Naive thymus-derived CD4-positive, alpha-beta T cell (primary cell): ENCODE measurements at regions of chr16 and their contacts with region 1.

Region 1: GRCh38 chr16:67480833-67481560 is at the start of gene ATP6V0D1:
- DNase-seq: peak; percentile 97 to 100 (median 99)
- ATAC-seq: peak; percentile 94
- H3K4me3 ChIP-seq: peak within 1 kb of the TSS; percentile 92
- H3K4me3 Mint-ChIP-seq: peak within 1 kb of the TSS; percentile 95 to 100 (median 99)
- H3K27ac ChIP-seq: peak within 1 kb of the TSS; percentile 99
- H3K27ac Mint-ChIP-seq: peak within 1 kb of the TSS; percentile 95 to 99 (median 98)
- H3K4me1 ChIP-seq: peaks cover 15 to 25% of the 10 kb centered on the region in 2 donors
- H3K4me1 Mint-ChIP-seq: peaks cover 20 to 60% (median 37%) of the 10 kb centered on the region in 7 donors
- H3K27me3 ChIP-seq: no peaks in the 10 kb centered on the region
- H3K27me3 Mint-ChIP-seq: no peaks in the 10 kb centered on the region
- total RNA-seq, gene ATP6V0D1: 35.8 to 104 (median 54.7) TPM

Region 2: DNA sequence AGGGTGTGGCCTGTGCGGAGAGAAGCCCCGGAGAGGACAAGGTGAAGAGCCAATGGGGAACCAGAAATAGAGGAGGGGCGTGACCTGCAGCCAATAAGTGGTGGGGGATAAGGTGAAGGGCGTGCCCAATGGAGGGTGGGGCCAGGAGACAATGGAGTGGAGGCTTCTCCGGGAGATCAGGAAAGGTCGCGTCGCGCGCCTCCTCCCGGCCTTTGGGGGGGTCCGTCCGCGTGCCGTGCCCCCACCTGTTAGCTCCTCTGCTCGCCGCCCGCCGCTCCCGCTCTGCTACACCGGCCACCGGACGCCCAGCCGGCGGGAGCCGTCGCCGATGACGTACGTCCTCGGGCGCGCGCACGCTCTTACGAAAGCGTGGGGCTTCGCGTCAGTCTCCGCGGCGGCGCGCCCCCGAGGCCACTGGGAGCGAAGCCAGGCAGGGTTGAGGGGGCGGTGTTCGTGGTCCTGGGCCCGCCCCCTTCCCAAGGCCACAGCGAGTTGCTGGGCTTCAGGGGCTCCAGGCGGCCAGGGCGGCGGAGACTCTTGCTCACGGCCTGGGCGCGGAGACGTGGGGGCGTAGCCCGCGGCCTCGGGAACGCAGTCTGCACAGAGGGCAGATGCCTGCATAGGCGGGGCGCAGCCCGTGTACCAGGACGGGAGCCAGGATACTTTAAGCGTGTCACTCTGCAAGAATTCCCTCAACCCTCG is 297.2 kb before region 1 on chr16 and contains the start of gene MATCAP1:
- CTCF ChIA-PET with region 1: no interaction called
- POLR2A ChIA-PET with region 1: no interaction called
- intact Hi-C with region 1: loop called (anchors 2 kb)
- DNase-seq: peak; percentile 90 to 98 (median 96)
- ATAC-seq: peak; percentile 97
- H3K4me3 ChIP-seq: peak within 1 kb of the TSS; percentile 79
- H3K4me3 Mint-ChIP-seq: peak within 1 kb of the TSS in 5 of 10 donors; percentile 48 to 91 (median 86)
- H3K27ac ChIP-seq: peak within 1 kb of the TSS; percentile 97
- H3K27ac Mint-ChIP-seq: peak within 1 kb of the TSS in 2 of 9 donors; percentile 58 to 67
- H3K4me1 ChIP-seq: peaks cover 12 to 15% of the 10 kb centered on the region in 2 donors
- H3K4me1 Mint-ChIP-seq: peaks cover 8 to 24% (median 13%) of the 10 kb centered on the region in 7 donors
- H3K27me3 ChIP-seq: no peaks in the 10 kb centered on the region
- H3K27me3 Mint-ChIP-seq: peaks cover 4 to 15% (median 4%) of the 10 kb centered on the region in 5 donors
- total RNA-seq, gene MATCAP1: 4.3 to 88.1 (median 11.0) TPM

Region 3: DNA sequence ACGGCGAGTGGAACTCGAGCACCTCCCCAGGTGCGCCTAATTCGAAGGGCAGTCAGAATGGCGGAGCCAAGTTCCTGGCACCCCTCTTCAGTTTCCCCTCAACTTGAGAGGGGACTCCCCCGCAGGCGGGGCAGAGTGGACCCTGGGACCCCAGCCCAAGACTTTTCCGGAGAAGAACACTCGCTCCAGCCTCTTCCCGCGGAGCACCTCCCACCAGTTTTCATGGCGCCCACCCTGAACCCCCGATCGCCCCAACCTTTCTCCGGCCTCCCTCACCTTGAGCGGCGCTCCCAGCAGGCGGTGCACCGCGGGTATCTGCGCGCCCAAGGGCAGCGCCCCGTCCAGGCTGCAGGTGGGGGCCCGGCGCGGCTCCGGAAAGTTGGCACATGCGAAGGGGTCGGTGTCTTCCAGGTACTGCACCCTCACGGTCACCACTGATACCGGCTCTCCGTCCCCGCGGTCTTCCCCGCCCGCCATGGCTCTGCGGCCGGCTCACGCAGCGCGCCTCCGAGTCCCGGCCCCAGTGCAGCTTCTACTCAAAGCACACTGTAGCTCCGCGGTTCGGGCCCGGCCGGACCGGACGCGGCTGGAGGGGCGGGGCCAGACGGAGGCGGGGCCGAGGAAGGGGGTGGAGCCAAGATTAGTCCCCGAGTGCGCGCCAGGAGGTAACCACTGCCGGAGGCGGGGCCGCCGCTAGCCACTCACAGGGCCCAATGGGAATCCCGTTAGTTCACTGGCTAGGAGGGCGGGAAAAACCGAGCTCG is 233.9 kb before region 1 on chr16 and contains the start of gene FHOD1:
- CTCF ChIA-PET with region 1: no interaction called
- POLR2A ChIA-PET with region 1: no interaction called
- intact Hi-C with region 1: loop called in 1 of 2 experiments (anchors 5 kb)
- DNase-seq: peak; percentile 88 to 100 (median 91)
- ATAC-seq: peak; percentile 85
- H3K4me3 ChIP-seq: peak within 1 kb of the TSS; percentile 68
- H3K4me3 Mint-ChIP-seq: peak within 1 kb of the TSS; percentile 83 to 96 (median 91)
- H3K27ac ChIP-seq: peak within 1 kb of the TSS; percentile 60
- H3K27ac Mint-ChIP-seq: peak within 1 kb of the TSS; percentile 70 to 92 (median 80)
- H3K4me1 ChIP-seq: peaks cover 31 to 39% of the 10 kb centered on the region in 2 donors
- H3K4me1 Mint-ChIP-seq: peaks cover 37 to 51% (median 45%) of the 10 kb centered on the region in 7 donors
- H3K27me3 ChIP-seq: no peaks in the 10 kb centered on the region
- H3K27me3 Mint-ChIP-seq: peaks cover 0 to 20% (median 0%) of the 10 kb centered on the region in 5 donors
- total RNA-seq, gene FHOD1: 23.7 to 81.7 (median 35.1) TPM

Region 4: DNA sequence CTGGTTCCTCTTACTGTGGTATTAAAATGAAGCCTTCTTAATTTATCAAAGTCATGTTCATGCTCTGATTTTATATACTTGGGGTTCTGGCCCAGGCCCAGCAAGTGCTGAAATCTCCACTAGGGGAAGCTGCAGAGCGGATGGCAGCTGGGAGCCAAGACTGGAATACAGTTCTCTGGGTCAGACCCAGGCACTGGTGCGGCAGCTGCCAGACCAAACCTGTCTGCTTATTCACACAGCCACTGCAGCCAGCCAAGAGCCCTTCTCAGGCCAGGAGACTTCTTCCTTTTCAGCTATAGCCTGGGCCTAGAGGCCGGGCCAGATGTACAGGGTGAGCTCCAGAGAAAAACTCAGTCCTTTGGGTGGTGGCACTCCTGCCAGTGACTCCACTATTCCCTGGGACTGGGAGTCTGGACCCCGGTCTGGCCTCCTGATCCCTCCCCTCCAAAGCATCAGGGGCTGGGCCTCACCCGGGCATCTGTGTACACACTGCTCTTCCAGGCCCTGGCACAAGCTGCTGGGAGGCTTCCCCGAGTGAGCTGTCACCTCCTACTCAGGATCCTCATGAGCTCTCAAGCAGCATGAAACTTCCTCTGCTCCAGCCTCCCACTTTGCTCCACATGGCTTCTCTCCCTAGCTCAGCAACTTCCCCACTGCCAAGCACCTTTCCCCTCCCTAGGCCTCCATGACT is 24.5 kb before region 1 on chr16:
- CTCF ChIA-PET with region 1: no interaction called
- POLR2A ChIA-PET with region 1: no interaction called
- intact Hi-C with region 1: no loop called
- DNase-seq: no peak
- ATAC-seq: no peak
- H3K4me3 ChIP-seq: no peak overlapping the region
- H3K4me3 Mint-ChIP-seq: no peak overlapping the region
- H3K27ac ChIP-seq: no peak overlapping the region
- H3K27ac Mint-ChIP-seq: peak overlapping the region in 1 of 9 donors; percentile 83
- H3K4me1 ChIP-seq: no peaks in the 10 kb centered on the region
- H3K4me1 Mint-ChIP-seq: peaks cover 7 to 29% (median 19%) of the 10 kb centered on the region in 7 donors
- H3K27me3 ChIP-seq: no peaks in the 10 kb centered on the region
- H3K27me3 Mint-ChIP-seq: no peaks in the 10 kb centered on the region

Region 5: DNA sequence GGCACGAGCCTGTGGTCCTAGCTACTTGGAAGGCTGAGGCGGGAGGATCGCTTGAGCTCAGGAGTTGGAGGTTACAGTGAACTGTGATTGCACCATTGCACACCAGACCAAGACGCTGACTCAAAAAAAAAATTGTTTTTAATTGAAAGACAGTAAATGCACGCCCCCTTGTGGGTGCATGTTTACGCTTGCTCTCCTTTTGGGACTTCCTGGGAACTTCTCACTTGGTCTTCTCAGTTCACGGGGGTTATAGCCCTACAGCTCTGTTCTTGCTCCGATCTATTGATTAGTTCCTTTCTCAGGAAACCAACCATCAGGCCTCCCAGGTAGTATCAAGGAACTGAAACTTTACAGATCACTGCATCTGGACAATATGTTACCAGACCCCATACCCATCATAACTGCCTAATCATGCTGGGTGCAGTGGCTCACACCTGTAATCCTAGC is 33.4 kb after region 1 on chr16:
- CTCF ChIA-PET with region 1: interaction called, 70 read pairs
- POLR2A ChIA-PET with region 1: interaction called, 16 read pairs
- intact Hi-C with region 1: loop called (anchors 1 kb)
- DNase-seq: peak; percentile 54 to 83 (median 76)
- ATAC-seq: peak; percentile 91
- H3K4me3 ChIP-seq: no peak overlapping the region
- H3K4me3 Mint-ChIP-seq: peak overlapping the region in 2 of 10 donors; percentile 24 to 63
- H3K27ac ChIP-seq: no peak overlapping the region
- H3K27ac Mint-ChIP-seq: peak overlapping the region in 7 of 9 donors; percentile 14 to 61 (median 40)
- H3K4me1 ChIP-seq: peaks cover 4 to 5% of the 10 kb centered on the region in 2 donors
- H3K4me1 Mint-ChIP-seq: peaks cover 13 to 28% (median 21%) of the 10 kb centered on the region in 7 donors
- H3K27me3 ChIP-seq: no peaks in the 10 kb centered on the region
- H3K27me3 Mint-ChIP-seq: peaks cover 0 to 5% (median 0%) of the 10 kb centered on the region in 5 donors

Region 6: DNA sequence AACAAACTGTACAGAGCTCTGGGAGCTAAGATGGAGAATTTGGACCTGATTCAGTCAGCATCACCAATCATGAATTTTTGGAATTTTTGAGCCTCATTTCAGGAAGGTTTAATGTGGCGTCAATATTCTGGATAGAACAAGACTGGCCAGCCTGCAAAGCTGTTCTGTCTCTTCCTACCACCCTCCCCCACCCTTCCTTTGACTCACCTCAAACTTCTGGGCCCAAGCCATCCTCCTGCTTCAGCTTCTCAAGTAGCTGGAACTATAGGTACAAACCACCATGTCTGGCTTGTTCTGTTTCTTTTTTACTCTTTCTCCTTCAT is 114.0 kb after region 1 on chr16:
- CTCF ChIA-PET with region 1: no interaction called
- POLR2A ChIA-PET with region 1: no interaction called
- intact Hi-C with region 1: no loop called
- DNase-seq: no peak
- ATAC-seq: no peak
- H3K4me3 ChIP-seq: no peak overlapping the region
- H3K4me3 Mint-ChIP-seq: peak overlapping the region in 1 of 10 donors; percentile 1
- H3K27ac ChIP-seq: no peak overlapping the region
- H3K27ac Mint-ChIP-seq: peak overlapping the region in 7 of 9 donors; percentile 5 to 70 (median 56)
- H3K4me1 ChIP-seq: peaks cover 0 to 9% of the 10 kb centered on the region in 2 donors
- H3K4me1 Mint-ChIP-seq: peaks cover 29 to 62% (median 56%) of the 10 kb centered on the region in 7 donors
- H3K27me3 ChIP-seq: no peaks in the 10 kb centered on the region
- H3K27me3 Mint-ChIP-seq: no peaks in the 10 kb centered on the region

Region 7: DNA sequence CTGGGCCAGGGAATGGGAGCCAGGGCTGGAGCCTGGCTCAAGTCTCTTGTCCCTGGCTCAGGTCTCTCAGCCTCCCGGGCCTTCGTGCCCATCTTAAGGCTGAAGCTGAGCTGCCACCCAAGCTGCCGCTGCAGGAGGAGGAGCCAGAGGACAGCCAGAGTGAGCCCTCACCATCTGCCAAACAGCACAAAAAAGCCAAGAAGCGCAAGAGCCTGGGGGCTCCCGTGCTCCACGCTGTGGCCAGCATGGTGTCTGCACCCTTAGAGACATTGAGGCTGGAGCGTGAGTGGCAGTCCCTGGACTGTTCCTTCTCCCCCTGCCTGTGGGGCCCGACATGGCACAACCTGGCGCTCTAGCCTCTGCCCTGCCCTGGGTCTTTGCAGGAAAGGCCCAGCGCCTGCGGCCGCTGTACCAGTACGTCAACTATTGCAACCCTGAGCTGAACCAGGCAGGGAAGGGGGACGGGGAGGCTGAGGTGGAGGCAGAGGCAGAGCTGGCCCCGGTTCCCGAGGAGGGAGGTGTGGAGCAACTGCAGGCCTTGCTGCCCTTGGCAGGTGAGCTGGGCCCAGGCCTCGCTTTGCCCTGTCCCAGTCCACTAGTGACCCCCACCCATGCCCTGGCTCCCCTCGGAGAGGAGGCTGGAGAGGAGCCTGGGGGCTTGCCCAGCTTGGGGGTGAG is 187.0 kb after region 1 on chr16:
- CTCF ChIA-PET with region 1: interaction called, 14 read pairs
- POLR2A ChIA-PET with region 1: interaction called, 12 read pairs
- intact Hi-C with region 1: loop called (anchors 1 kb)
- DNase-seq: peak; percentile 61 to 88 (median 82)
- ATAC-seq: peak; percentile 93
- H3K4me3 ChIP-seq: peak overlapping the region; percentile 56
- H3K4me3 Mint-ChIP-seq: peak overlapping the region; percentile 42 to 96 (median 82)
- H3K27ac ChIP-seq: peak overlapping the region; percentile 73
- H3K27ac Mint-ChIP-seq: peak overlapping the region in 6 of 9 donors; percentile 31 to 67 (median 58)
- H3K4me1 ChIP-seq: peaks cover 9 to 12% of the 10 kb centered on the region in 2 donors
- H3K4me1 Mint-ChIP-seq: peaks cover 10 to 32% (median 17%) of the 10 kb centered on the region in 7 donors
- H3K27me3 ChIP-seq: no peaks in the 10 kb centered on the region
- H3K27me3 Mint-ChIP-seq: no peaks in the 10 kb centered on the region

Region 8: DNA sequence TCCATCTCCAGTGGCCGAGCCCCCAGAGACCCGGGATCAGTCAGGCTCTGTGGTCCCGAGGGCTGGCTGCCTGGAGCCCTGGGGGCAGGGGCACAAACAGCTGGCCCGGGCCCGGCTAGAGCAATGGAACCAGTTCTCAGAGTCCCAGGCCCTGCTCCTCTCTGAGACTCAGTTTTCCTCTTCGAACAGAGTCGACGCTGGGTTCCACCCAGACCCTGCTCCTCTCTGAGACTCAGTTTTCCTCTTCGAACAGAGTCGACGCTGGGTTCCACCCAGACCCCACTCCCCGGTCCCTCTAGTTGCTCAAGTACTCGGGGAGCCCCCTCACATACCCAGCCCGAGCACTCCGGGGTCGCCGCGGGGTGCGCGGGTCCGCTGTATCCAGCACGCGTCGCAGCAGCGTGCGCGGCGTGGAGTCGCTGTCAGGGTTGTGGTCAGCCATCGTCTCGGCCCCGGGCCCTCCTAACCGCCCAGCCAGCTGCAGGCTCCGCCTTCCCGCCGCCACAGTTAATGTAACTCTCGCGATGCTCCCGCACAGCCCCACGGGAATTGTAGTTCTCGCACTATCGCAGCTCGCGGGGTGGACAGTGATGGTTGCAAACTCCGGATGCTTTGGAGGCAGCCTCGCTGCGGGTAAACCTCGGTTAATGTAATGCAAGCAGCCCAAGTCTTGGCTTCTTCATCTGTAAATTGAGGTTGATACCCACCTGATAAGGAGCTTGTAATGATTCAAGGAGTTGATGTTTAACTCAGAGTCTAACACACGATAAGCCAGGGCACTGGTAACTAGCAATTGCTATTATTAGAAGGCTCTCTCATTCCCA is 352.6 kb after region 1 on chr16:
- CTCF ChIA-PET with region 1: no interaction called
- POLR2A ChIA-PET with region 1: no interaction called
- intact Hi-C with region 1: loop called in 1 of 2 experiments (anchors 2 kb)
- DNase-seq: peak; percentile 83 to 92 (median 89)
- ATAC-seq: peak; percentile 100
- H3K4me3 ChIP-seq: peak overlapping the region; percentile 82
- H3K4me3 Mint-ChIP-seq: peak overlapping the region; percentile 90 to 96 (median 93)
- H3K27ac ChIP-seq: peak overlapping the region; percentile 70
- H3K27ac Mint-ChIP-seq: peak overlapping the region; percentile 73 to 93 (median 82)
- H3K4me1 ChIP-seq: peaks cover 8 to 9% of the 10 kb centered on the region in 2 donors
- H3K4me1 Mint-ChIP-seq: peaks cover 11 to 19% (median 15%) of the 10 kb centered on the region in 7 donors
- H3K27me3 ChIP-seq: no peaks in the 10 kb centered on the region
- H3K27me3 Mint-ChIP-seq: no peaks in the 10 kb centered on the region

Region 9: DNA sequence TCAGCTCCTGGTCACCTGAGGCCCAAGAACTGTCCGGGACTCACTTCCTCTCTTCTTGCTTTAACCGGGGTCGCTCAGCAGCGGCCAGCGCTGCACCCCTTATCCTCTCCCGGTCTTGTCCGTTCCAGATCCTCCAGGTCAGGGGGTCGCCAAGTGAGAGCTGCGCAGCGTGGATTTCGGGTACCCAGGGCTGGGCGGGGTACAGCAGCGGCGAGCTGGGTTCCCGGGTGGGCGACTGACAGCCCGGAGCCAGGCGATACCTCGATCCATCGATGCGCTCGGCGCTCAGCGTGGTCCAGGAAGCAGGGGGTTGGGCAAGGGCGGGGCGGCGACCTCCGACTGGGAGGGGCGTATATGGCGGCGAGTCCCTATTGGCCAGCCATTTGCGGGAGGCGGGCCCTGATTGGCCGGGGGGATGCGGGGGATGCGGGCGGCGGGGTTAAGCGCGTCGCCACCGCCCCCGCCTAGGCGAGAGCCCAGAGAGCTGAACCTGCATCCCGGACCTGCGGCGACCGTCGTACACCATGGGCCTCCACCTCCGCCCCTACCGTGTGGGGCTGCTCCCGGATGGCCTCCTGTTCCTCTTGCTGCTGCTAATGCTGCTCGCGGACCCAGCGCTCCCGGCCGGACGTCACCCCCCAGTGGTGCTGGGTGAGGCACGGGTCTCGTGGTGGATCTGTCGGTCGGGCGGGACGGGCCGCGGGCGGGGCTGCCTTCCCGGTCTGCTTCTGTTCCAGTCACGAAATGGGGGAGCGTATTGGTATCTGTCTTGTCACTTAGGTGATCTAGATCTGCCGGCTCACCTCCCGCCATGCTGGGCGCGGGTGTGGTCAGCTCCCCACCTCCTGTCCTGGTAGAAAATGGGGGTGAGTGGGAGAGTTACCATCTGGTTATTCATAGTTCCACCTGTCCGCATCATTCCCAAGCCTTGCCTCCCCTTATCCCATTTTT is 764.2 kb after region 1 on chr16 and contains the start of gene PLA2G15:
- CTCF ChIA-PET with region 1: no interaction called
- POLR2A ChIA-PET with region 1: no interaction called
- intact Hi-C with region 1: loop called in 1 of 2 experiments (anchors 10 kb)
- DNase-seq: peak; percentile 89 to 96 (median 94)
- ATAC-seq: peak; percentile 99
- H3K4me3 ChIP-seq: peak within 1 kb of the TSS; percentile 99
- H3K4me3 Mint-ChIP-seq: peak within 1 kb of the TSS; percentile 91 to 100 (median 98)
- H3K27ac ChIP-seq: peak within 1 kb of the TSS; percentile 68
- H3K27ac Mint-ChIP-seq: peak within 1 kb of the TSS; percentile 61 to 94 (median 86)
- H3K4me1 ChIP-seq: peaks cover 13 to 14% of the 10 kb centered on the region in 2 donors
- H3K4me1 Mint-ChIP-seq: peaks cover 8 to 33% (median 28%) of the 10 kb centered on the region in 7 donors
- H3K27me3 ChIP-seq: no peaks in the 10 kb centered on the region
- H3K27me3 Mint-ChIP-seq: peaks cover 0 to 2% (median 0%) of the 10 kb centered on the region in 5 donors
- total RNA-seq, gene PLA2G15: 8.5 to 16.8 (median 9.9) TPM